ENCODE measurements at regions of chr9 and their contacts with region 1.

Region 1: DNA sequence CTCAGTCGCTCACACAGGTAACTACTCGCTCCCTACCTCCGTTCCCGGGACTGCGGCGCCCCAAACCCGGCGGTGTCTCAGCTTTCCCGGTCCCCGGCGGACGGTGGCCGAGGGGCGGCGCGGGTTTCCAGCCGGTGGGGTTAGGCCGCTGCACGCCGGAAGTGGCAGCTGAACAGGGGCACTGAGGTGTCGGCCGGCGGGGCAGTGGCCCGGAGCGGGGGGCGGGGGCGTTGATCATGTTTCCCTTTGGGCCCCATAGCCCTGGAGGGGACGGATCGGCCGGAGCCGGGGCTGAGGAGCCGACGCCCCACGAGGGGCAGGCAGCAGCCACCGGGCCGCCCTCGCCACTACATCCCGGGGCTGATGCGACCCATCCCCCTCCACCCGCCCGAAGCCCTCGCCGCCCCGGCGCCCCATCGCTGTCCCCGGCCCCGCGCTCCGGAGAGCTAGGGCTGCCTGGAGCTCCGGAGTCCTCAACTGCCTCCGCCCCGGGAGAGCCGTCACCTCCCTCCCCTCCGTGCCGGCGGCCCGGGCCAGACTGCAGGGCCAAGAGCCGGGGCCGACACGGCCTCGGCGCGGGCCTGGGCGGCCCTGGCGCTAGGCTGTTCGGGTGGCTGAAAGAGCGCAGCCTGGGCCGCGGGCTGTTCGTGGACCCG is at the start of gene DCAF10:
- DNase-seq: peak; percentile 87 to 94 (median 88)
- ATAC-seq: peak; percentile 79 to 97 (median 96)
- H3K4me3 ChIP-seq: peak within 1 kb of the TSS; percentile 77 to 100 (median 95)
- H3K27ac ChIP-seq: peak within 1 kb of the TSS; percentile 28 to 93 (median 88)
- H3K4me1 ChIP-seq: peaks cover 0 to 33% (median 26%) of the 10 kb centered on the region in 12 donors
- H3K27me3 ChIP-seq: no peaks in the 10 kb centered on the region
- CTCF ChIP-seq: no peak
- POLR2A ChIP-seq: peak in 1 of 2 donors; percentile 73
- total RNA-seq, gene DCAF10: 13.3 to 24.3 (median 20.1) TPM

Region 2: DNA sequence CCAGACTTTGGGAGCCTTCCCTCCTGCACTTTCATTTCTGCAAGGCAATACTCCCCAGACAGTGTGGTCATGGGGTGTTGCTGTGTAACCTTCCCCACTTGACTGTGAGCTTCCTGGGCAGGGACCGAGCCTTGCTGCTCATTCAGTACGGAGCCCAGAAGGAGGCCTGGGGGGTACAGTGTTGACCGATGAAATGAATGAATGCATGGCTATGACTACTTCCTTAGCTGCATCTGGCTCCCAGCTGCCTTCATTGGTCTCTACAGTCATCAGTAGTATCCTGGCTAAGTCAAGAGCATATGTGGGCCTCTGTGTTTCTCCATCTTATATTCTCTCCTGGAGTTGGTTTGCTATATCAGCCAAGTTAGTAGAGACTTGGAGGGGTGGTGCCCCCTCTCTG is 140.1 kb before region 1 on chr9:
- intact Hi-C with region 1: no loop called
- DNase-seq: no peak
- ATAC-seq: no peak
- H3K4me3 ChIP-seq: no peak overlapping the region
- H3K27ac ChIP-seq: no peak overlapping the region
- H3K4me1 ChIP-seq: no peaks in the 10 kb centered on the region
- H3K27me3 ChIP-seq: peaks cover 0 to 18% (median 0%) of the 10 kb centered on the region in 9 donors
- CTCF ChIP-seq: no peak
- POLR2A ChIP-seq: no peak

Region 3: DNA sequence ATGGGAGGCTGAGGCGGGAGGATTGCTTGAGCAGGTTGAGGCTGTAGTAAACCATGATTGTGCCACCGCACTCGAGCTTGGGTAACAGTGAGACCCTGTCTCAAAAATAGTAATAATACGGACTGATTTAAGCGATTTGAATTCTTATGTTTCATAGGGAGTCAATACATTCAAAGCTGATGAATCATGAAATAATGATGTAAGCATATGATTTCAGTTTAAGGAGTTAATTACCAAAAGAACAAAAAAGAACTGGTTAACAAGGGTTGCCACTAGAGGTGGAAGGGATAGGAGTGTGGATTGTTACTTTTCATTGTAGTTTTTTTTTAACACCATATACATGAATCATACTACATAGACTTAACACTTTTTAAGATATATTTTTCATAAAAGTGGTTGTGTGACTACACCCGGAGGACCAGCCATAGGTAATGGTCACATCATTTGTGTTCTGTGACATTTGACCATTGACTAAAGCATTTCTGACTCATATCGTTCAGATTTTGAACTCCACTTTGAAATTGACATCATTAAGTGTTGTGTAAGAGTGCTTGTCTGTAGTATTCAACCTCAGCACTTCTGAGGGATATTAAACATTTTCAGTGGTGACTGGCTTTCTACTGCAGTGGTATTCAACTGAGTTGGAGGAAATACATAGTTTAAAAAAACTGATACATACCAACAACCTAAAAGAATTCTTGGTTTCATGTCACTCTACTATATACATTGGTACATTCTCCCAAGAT is 40.2 kb before region 1 on chr9:
- intact Hi-C with region 1: loop called in 1 of 10 experiments (anchors 5 kb)
- DNase-seq: no peak
- ATAC-seq: no peak
- H3K4me3 ChIP-seq: no peak overlapping the region
- H3K27ac ChIP-seq: no peak overlapping the region
- H3K4me1 ChIP-seq: no peaks in the 10 kb centered on the region
- H3K27me3 ChIP-seq: no peaks in the 10 kb centered on the region
- CTCF ChIP-seq: no peak
- POLR2A ChIP-seq: no peak

Region 4: DNA sequence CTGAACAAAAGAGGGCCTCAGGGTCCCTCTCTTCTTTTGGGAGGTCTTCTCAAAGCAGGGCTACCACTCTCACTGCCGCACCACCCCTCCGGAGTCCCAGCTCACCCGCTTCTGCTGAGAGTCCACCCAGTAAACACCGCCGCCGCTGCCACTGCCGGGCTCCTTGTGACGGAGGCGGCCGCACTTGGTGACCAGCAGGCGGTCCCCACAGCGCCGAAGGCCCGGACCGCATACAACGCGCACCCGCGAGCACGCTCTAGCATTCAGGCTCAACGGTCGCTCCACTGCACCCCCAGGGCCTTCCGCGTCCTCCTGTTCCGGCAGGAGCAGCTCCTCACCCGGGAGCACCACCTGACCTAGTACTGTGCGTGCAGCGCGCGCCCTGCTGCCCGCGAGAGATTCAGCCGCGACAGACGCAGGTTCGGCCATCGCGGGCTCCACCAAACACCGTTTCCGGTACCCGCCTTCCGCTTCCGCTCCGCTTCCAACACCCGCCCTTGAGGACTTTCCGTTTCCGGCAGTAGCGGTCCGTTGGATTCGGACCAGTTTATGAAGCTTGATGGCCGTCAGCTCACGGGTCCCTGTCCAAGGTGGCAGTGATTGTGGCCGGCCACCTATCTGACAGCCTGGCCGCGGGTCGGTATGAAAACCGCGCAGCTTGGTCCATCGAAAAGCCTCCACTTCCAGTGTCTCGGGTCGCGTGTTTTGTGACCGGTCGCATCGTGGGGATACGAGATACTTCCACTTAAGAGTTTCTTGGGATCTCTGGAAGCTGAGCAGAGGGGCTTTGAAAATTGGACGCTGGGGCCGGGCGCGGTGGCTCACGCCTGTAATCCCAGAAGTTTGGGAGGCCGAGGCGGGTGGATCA is 15.9 kb before region 1 on chr9 and contains the start of gene EXOSC3:
- intact Hi-C with region 1: loop called in 3 of 10 experiments (anchors 1 to 2 kb)
- DNase-seq: peak; percentile 88 to 93 (median 92)
- ATAC-seq: peak; percentile 95 to 98 (median 98)
- H3K4me3 ChIP-seq: peak within 1 kb of the TSS; percentile 74 to 98 (median 88)
- H3K27ac ChIP-seq: peak within 1 kb of the TSS; percentile 25 to 90 (median 84)
- H3K4me1 ChIP-seq: peaks cover 3 to 28% (median 18%) of the 10 kb centered on the region in 12 donors
- H3K27me3 ChIP-seq: peaks cover 0 to 9% (median 0%) of the 10 kb centered on the region in 9 donors
- CTCF ChIP-seq: peak in 7 of 12 donors; percentile 9 to 24 (median 16)
- POLR2A ChIP-seq: peak in 1 of 2 donors; percentile 70
- total RNA-seq, gene EXOSC3: 9.6 to 18.6 (median 14.0) TPM

Region 5: GRCh38 chr9:37840560-37841194 is 39.9 kb after region 1 on chr9:
- intact Hi-C with region 1: no loop called
- DNase-seq: no peak
- ATAC-seq: no peak
- H3K4me3 ChIP-seq: no peak overlapping the region
- H3K27ac ChIP-seq: no peak overlapping the region
- H3K4me1 ChIP-seq: peaks cover 0 to 8% (median 0%) of the 10 kb centered on the region in 12 donors
- H3K27me3 ChIP-seq: no peaks in the 10 kb centered on the region
- CTCF ChIP-seq: no peak
- POLR2A ChIP-seq: no peak

Region 6: GRCh38 chr9:37876376-37876775 is 75.6 kb after region 1 on chr9:
- intact Hi-C with region 1: loop called in 1 of 10 experiments (anchors 10 kb)
- DNase-seq: no peak
- ATAC-seq: no peak
- H3K4me3 ChIP-seq: no peak overlapping the region
- H3K27ac ChIP-seq: no peak overlapping the region
- H3K4me1 ChIP-seq: peaks cover 0 to 6% (median 0%) of the 10 kb centered on the region in 12 donors
- H3K27me3 ChIP-seq: no peaks in the 10 kb centered on the region
- CTCF ChIP-seq: no peak
- POLR2A ChIP-seq: no peak

Region 7: DNA sequence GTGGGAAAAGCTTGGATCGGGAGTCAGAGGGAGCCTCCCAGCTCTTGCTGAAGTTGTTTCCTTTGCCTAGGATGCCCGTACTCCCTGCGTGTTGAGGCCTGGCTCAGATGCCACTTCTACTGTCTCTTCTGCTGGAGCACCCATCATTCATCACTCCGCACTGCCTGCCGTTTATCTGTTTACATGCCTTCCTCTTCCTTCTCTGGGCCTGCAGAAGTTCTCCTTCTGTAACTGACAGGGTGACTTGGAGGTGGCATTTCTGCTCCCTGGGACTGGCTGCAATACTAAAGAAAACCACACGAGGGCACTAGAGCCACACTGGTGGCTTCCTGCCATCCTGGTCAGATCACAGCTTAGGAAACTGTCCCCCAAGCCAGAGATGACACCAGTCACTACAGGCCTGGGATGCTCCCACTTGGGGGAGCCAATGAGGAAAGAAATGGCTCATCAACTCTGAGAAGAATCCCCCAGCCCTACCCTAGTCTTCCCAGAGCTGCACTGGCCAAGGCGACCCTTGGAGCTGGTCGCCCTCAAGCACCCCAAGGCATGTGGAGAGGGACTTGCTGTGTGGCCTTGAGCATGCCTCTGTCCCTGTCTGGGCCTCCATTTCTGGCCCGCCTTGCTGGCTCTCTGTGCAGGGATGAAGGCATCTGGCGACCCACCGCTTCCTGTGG is 112.9 kb after region 1 on chr9:
- intact Hi-C with region 1: no loop called
- DNase-seq: peak in 4 of 5 donors; percentile 66 to 81 (median 78)
- ATAC-seq: peak; percentile 70 to 85 (median 82)
- H3K4me3 ChIP-seq: no peak overlapping the region
- H3K27ac ChIP-seq: peak overlapping the region in 1 of 12 donors; percentile 0
- H3K4me1 ChIP-seq: peaks cover 0 to 42% (median 28%) of the 10 kb centered on the region in 12 donors
- H3K27me3 ChIP-seq: no peaks in the 10 kb centered on the region
- CTCF ChIP-seq: peak in 11 of 12 donors; percentile 92 to 99 (median 98)
- POLR2A ChIP-seq: no peak